ENCODE measurements at regions of chr3 and their contacts with region 1.

Region 1: GRCh38 chr3:69823743-69824142 is 84.5 kb downstream of the MITF start:
- DNase-seq: no peak
- ATAC-seq: no peak
- H3K4me3 ChIP-seq: no peak overlapping the region
- H3K4me3 Mint-ChIP-seq: no peak overlapping the region
- H3K27ac ChIP-seq: no peak overlapping the region
- H3K27ac Mint-ChIP-seq: no peak overlapping the region
- H3K4me1 ChIP-seq: no peaks in the 10 kb centered on the region
- H3K4me1 Mint-ChIP-seq: no peaks in the 10 kb centered on the region
- H3K27me3 ChIP-seq: no peaks in the 10 kb centered on the region
- H3K27me3 Mint-ChIP-seq: no peaks in the 10 kb centered on the region
- CTCF ChIP-seq: no peak

Region 2: GRCh38 chr3:69747511-69748258 is 76.1 kb before region 1 on chr3:
- intact Hi-C with region 1: no loop called
- DNase-seq: no peak
- ATAC-seq: no peak
- H3K4me3 ChIP-seq: no peak overlapping the region
- H3K4me3 Mint-ChIP-seq: no peak overlapping the region
- H3K27ac ChIP-seq: no peak overlapping the region
- H3K27ac Mint-ChIP-seq: no peak overlapping the region
- H3K4me1 ChIP-seq: peaks cover 5% of the 10 kb centered on the region
- H3K4me1 Mint-ChIP-seq: no peaks in the 10 kb centered on the region
- H3K27me3 ChIP-seq: no peaks in the 10 kb centered on the region
- H3K27me3 Mint-ChIP-seq: peaks cover 0 to 2% of the 10 kb centered on the region in 2 donors
- CTCF ChIP-seq: no peak

Region 3: GRCh38 chr3:69842789-69843188 is 19.0 kb after region 1 on chr3:
- intact Hi-C with region 1: loop called (anchors 2 kb)
- DNase-seq: no peak
- ATAC-seq: no peak
- H3K4me3 ChIP-seq: no peak overlapping the region
- H3K4me3 Mint-ChIP-seq: no peak overlapping the region
- H3K27ac ChIP-seq: no peak overlapping the region
- H3K27ac Mint-ChIP-seq: no peak overlapping the region
- H3K4me1 ChIP-seq: no peaks in the 10 kb centered on the region
- H3K4me1 Mint-ChIP-seq: no peaks in the 10 kb centered on the region
- H3K27me3 ChIP-seq: no peaks in the 10 kb centered on the region
- H3K27me3 Mint-ChIP-seq: no peaks in the 10 kb centered on the region
- CTCF ChIP-seq: no peak

Measured in natural killer cell (primary cell).